SK-N-SH (cell line): ENCODE measurements at regions of chr7 and their contacts with region 1.

Region 1: DNA sequence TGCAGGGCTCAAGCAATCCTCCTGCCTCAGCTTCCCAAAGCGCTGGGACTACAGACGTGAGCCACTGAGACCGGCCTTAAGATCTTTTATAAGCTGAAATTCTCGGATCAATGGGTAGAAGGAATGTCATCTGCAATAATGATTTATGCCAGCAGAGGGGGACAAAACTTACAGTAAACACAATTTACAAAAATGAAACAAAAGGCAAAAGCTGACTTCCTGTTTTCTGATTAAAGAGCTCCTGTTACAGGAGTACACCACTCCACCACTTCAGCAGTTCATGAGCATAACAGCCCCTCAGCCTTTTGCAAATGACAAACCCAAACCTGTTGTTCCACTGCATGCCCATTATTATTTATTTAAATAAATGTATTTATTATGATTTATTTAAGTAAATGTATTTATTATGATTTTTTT is 88.5 kb upstream of the ATP6V0A4 start:
- DNase-seq: peak; percentile 68
- H3K4me3 ChIP-seq: no peak overlapping the region
- H3K27ac ChIP-seq: peak overlapping the region in 1 of 2 experiments; percentile 11; a peak in 1 of 4 replicates
- H3K4me1 ChIP-seq: peaks cover 20 to 35% of the 10 kb centered on the region in 2 experiments
- H3K27me3 ChIP-seq: no peaks in the 10 kb centered on the region
- CTCF ChIP-seq: peak; percentile 92
- EP300 ChIP-seq: no peak
- RAD21 ChIP-seq: peak; percentile 88

Region 2: GRCh38 chr7:138875794-138876193 is 10.7 kb before region 1 on chr7:
- CTCF ChIA-PET with region 1: interaction called, 57 read pairs
- POLR2A ChIA-PET with region 1: interaction called, 4 read pairs
- DNase-seq: no peak
- H3K4me3 ChIP-seq: no peak overlapping the region
- H3K27ac ChIP-seq: peak overlapping the region in 1 of 2 experiments; percentile 63; a peak in 2 of 4 replicates
- H3K4me1 ChIP-seq: peaks cover 0 to 10% of the 10 kb centered on the region in 2 experiments; a peak in 2 of 4 replicates
- H3K27me3 ChIP-seq: no peaks in the 10 kb centered on the region
- CTCF ChIP-seq: no peak
- EP300 ChIP-seq: peak in 1 of 2 experiments; percentile 84; a peak in 1 of 4 replicates
- RAD21 ChIP-seq: no peak

Region 3: DNA sequence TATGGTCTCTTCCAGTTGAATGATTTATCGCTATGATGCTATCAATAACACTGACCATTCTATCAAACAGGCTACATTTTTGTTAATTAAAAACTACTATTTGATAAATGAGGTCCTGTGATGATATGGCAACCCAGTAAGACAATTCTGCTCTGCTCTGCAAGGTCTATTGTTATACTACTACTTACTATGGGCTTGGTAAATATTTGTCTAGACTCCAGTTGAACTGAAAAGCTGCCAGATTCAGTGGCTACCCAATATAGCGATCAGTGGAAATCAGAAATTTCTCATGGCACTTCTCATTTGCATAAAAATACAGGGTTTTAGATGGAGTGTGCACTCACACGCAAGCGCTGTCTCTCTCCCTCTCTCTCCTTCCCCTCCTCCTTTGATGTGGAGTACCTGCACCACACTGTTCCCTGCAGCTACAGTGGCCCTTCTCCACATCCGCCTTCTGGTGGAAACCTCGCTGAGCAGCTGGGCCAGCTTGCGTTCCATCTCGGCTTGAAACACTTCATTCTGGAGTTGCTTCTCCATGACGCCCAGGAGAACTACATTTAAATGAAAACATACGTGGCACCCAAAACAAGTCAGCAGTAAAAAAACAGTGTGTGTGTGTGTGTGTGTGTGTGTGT is 16.8 kb after region 1 on chr7:
- CTCF ChIA-PET with region 1: interaction called, 30 read pairs
- POLR2A ChIA-PET with region 1: no interaction called
- DNase-seq: no peak
- H3K4me3 ChIP-seq: no peak overlapping the region
- H3K27ac ChIP-seq: no peak overlapping the region
- H3K4me1 ChIP-seq: peaks cover 0 to 3% of the 10 kb centered on the region in 2 experiments; a peak in 1 of 4 replicates
- H3K27me3 ChIP-seq: no peaks in the 10 kb centered on the region
- CTCF ChIP-seq: no peak
- EP300 ChIP-seq: no peak
- RAD21 ChIP-seq: no peak

Region 4: GRCh38 chr7:138935465-138936011 is 49.0 kb after region 1 on chr7:
- CTCF ChIA-PET with region 1: interaction called, 28 read pairs
- POLR2A ChIA-PET with region 1: interaction called, 3 read pairs
- DNase-seq: peak; percentile 89
- H3K4me3 ChIP-seq: no peak overlapping the region; a peak in 2 of 4 replicates
- H3K27ac ChIP-seq: peak overlapping the region; percentile 88 to 99
- H3K4me1 ChIP-seq: peaks cover 21 to 45% of the 10 kb centered on the region in 2 experiments
- H3K27me3 ChIP-seq: no peaks in the 10 kb centered on the region
- CTCF ChIP-seq: no peak
- EP300 ChIP-seq: peak; percentile 61 to 94; a peak in 3 of 4 replicates
- RAD21 ChIP-seq: peak; percentile 40

Region 5: GRCh38 chr7:138981332-138982203 is 95.1 kb after region 1 on chr7 and contains the start of gene KIAA1549:
- CTCF ChIA-PET with region 1: interaction called, 65 read pairs
- POLR2A ChIA-PET with region 1: interaction called, 6 read pairs
- DNase-seq: peak; percentile 98
- H3K4me3 ChIP-seq: peak within 1 kb of the TSS; percentile 59 to 89
- H3K27ac ChIP-seq: peak within 1 kb of the TSS; percentile 35 to 64; a peak in 3 of 4 replicates
- H3K4me1 ChIP-seq: peaks cover 0 to 37% of the 10 kb centered on the region in 2 experiments; a peak in 2 of 4 replicates
- H3K27me3 ChIP-seq: no peaks in the 10 kb centered on the region
- CTCF ChIP-seq: no peak
- EP300 ChIP-seq: no peak
- RAD21 ChIP-seq: peak; percentile 56
- polyA plus RNA-seq, gene KIAA1549: 3.0 and 3.6 TPM in 2 replicates

Region 6: DNA sequence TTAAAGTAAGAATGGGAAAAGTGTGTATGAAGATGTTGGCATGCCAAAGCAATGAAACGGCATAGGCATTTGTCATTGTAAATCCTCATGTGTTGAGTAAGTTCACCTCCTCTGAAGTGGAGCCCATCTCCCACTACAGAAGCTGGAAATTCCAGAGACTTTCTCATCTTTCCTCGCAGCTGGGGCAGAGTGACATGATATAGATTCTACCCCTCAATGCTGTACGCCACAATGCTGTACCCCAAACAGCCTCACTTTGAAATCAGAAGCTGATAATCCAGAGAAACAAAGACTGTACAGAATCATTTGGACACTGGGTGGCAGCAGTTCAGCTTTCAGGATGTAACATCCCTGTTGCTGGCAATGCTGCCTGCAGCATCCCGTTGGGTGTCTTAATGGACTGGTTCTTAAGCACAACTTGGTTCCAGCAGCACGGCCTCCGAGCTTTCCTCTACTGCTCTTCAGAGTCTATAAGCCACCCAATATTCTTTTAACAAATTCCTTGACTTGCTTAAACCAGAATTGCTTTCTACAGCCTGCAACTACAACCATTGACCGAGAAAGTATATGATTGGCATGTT is 130.5 kb after region 1 on chr7:
- CTCF ChIA-PET with region 1: interaction called, 33 read pairs
- POLR2A ChIA-PET with region 1: interaction called, 3 read pairs
- DNase-seq: peak; percentile 88
- H3K4me3 ChIP-seq: peak overlapping the region in 1 of 2 experiments; percentile 31; a peak in 1 of 4 replicates
- H3K27ac ChIP-seq: no peak overlapping the region
- H3K4me1 ChIP-seq: peaks cover 0 to 3% of the 10 kb centered on the region in 2 experiments; a peak in 2 of 4 replicates
- H3K27me3 ChIP-seq: 0 out of 2 replicates have a peak, but pooled peaks cover 4% of the 10 kb centered on the region
- CTCF ChIP-seq: peak; percentile 88
- EP300 ChIP-seq: no peak
- RAD21 ChIP-seq: peak; percentile 89

Region 7: DNA sequence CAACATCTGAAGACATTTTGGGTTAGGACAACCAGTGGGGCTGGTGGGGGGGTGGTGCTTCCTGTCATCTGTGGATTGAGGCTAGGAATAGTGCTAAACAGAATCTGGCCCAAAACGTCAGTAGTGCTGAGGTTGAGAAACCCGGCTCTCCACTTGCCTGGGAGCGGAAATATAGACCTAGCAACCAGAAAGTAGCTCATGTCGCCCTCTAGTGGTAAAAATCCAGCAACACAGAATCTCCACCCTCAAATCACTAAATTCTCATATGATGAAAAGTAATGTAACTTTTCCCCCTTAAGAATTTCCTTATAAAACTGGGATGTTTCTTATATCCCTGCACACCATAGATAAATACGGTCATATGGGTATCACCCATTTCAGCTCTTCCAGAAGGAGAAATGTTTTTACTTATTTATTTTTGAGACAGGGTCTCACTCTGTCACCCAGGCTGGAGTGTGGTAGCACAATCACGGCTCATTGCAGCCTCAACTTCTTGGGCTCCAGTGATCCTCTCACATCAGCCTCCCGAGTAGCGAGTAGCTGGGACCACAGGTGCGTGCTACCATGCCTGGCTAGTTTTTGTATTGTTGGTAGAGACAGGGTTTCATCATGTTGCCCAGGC is 188.6 kb after region 1 on chr7:
- CTCF ChIA-PET with region 1: interaction called, 48 read pairs
- POLR2A ChIA-PET with region 1: no interaction called
- DNase-seq: peak; percentile 84
- H3K4me3 ChIP-seq: peak overlapping the region in 1 of 2 experiments; percentile 2; a peak in 1 of 4 replicates
- H3K27ac ChIP-seq: peak overlapping the region; percentile 23 to 52; a peak in 2 of 4 replicates
- H3K4me1 ChIP-seq: peaks cover 0 to 3% of the 10 kb centered on the region in 2 experiments; a peak in 2 of 4 replicates
- H3K27me3 ChIP-seq: no peaks in the 10 kb centered on the region
- CTCF ChIP-seq: peak; percentile 99
- EP300 ChIP-seq: no peak
- RAD21 ChIP-seq: peak; percentile 97